Lower lobe of right lung (tissue), 2 donors: ENCODE measurements at regions of chr4 and their contacts with region 1.

Region 1: DNA sequence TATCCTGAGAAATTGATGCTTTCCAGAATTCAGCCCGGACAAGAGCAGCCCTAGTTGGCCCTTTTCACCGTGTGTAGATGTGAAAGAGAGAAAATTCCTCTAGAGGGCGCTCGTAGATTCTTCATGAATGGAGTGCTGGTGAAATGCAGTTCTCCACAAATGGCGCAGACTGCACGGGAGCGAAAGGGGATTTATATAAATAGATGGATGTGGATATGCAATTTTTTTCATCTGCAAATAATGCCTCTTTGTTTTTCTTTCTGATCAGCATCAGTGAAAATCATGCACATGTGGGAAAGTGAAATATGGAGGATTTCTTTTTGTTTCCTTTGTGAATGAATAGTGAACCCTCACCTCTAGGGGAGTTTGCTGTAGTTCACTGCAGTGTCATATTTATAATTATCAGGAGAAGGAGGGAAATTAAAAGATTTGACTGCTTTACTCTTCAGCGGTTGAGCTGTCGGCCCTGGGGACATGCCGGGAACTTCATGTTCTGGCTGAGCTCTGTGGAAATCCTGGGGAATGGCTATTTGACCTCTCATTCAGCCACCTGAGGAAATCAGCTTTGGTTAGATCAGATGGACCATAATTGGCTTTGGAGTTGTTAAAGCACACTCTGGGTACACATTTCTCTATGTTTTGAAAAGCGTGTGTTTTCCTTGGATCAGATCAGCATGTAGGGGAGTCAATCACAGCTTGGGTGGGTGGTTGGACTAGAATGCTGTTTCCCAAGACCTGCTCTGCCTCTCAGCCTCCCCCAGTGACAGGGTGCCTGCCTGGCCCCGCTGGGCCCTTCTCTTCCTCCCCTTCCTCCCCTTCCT is 115.0 kb upstream of the SHISA3 start:
- DNase-seq: no peak
- ATAC-seq: peak; percentile 82 to 90
- H3K4me3 ChIP-seq: no peak overlapping the region
- H3K27ac ChIP-seq: no peak overlapping the region
- H3K4me1 ChIP-seq: no peaks in the 10 kb centered on the region
- H3K27me3 ChIP-seq: no peaks in the 10 kb centered on the region
- CTCF ChIP-seq: peak; percentile 69

Region 2: GRCh38 chr4:42390622-42391354 is 108.5 kb after region 1 on chr4:
- intact Hi-C with region 1: no loop called
- DNase-seq: no peak
- ATAC-seq: no peak
- H3K4me3 ChIP-seq: no peak overlapping the region
- H3K27ac ChIP-seq: no peak overlapping the region
- H3K4me1 ChIP-seq: no peaks in the 10 kb centered on the region
- H3K27me3 ChIP-seq: peaks cover 6% of the 10 kb centered on the region
- CTCF ChIP-seq: no peak

Region 3: DNA sequence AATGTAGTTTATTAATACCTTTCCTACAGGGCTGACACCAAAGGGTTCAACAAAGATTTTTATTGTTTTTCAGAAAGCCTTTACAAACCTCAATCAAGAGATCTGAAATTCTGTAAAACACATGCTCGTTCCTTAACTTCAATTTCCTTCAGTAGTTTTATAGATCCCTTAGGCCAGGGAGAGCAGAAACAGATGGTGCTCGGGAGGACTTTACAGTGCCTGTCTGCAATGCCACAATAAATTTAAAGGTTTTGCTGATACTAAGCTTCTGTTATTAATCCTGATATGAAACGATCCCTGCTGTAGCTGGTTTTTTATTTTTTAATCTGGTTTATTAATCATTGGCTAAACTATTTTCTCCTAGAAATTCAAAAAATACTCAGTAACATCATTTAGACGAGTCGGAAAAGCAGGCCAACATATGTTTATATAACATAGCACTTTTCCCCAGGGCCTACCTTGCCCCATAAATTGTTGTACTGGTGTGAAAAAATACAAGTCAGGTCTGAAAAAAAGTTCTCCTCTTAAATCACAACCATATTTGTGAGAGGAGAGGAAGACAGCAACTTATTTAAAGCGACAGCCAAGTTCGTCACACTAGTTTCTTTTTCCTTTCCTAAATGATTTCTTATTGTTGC is 154.8 kb after region 1 on chr4:
- intact Hi-C with region 1: no loop called
- DNase-seq: no peak
- ATAC-seq: no peak
- H3K4me3 ChIP-seq: no peak overlapping the region
- H3K27ac ChIP-seq: no peak overlapping the region
- H3K4me1 ChIP-seq: no peaks in the 10 kb centered on the region
- H3K27me3 ChIP-seq: no peaks in the 10 kb centered on the region
- CTCF ChIP-seq: no peak

Region 4: GRCh38 chr4:42519803-42520417 is 237.6 kb after region 1 on chr4:
- intact Hi-C with region 1: loop called (anchors 10 kb)
- DNase-seq: no peak
- ATAC-seq: peak; percentile 48 to 68
- H3K4me3 ChIP-seq: no peak overlapping the region
- H3K27ac ChIP-seq: no peak overlapping the region
- H3K4me1 ChIP-seq: no peaks in the 10 kb centered on the region
- H3K27me3 ChIP-seq: no peaks in the 10 kb centered on the region
- CTCF ChIP-seq: peak; percentile 62